Adrenal gland (tissue), 19 donors: ENCODE measurements at regions of chr11 and their contacts with region 1.

Region 1: DNA sequence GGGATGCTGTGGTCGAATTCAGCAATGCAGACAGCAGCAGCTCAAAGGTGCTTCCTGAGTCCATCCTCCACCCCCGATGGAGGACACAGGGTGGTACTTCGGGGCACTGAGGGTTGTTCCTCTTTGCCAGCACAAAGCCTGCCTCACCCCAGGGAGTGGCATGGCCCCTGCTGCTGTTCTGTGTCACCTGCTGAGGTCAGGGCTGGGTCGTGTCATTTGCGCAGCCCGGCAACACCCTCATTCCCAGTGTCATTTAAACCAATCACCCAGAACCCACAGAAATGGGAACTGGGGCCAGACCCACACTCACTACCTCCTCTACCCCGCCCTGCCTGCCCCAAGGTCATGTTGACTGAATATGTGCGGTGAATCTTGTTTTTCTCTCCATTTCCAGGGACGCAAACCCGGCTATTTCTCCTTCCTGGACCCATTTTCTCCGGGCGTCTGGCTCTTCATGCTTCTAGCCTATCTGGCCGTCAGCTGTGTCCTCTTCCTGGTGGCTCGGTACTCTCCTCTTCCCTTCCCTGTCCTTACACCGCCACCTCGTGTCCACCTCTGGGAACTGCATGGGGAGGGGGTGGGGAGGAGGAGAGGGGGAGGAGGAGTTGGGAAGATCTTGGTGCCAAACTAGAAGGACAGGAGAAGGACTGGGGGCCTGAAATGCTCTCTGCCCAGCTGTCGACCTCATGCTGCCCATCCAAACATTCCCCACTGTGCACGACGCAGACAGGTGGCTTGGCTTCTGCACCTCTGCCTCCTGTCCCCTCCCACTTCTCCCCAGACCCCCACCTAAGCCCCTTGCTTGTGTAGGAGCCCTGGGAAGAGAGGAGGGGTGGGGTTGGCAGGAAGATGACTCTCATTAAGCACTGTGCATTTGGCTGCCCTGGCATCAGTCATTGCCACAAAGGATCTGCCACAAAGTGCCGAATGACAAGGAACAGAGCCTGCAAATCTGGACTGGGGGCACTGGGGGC is 71.2 kb upstream of the TBCEL start:
- DNase-seq: peak; percentile 81 to 90 (median 82)
- H3K4me3 ChIP-seq: peak overlapping the region in 1 of 4 donors; percentile 16
- H3K27ac ChIP-seq: no peak overlapping the region
- H3K4me1 ChIP-seq: peaks cover 0 to 4% of the 10 kb centered on the region in 2 donors
- H3K27me3 ChIP-seq: no peaks in the 10 kb centered on the region
- CTCF ChIP-seq: peak; percentile 59 to 84 (median 77)
- POLR2A ChIP-seq: no peak

Region 2: DNA sequence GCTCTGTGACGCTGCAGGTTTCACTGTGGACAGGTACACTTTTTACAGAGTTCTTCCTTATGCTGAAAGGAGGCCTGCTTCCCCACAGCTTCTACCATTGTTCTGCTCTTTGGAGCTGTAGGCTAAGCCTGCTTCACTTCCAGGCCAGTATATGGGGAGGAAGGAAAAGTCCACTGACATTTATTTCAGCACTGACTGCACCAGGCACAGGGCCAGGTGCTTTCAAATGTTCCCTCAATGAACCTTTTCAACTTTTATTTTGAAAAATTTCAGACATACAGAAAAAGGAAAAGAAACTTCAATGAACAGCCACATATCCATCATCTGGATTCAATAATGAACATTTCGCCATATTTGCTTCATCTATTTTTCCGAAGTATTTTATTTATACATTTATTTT is 690.8 kb before region 1 on chr11:
- intact Hi-C with region 1: no loop called
- DNase-seq: no peak
- H3K4me3 ChIP-seq: no peak overlapping the region
- H3K27ac ChIP-seq: no peak overlapping the region
- H3K4me1 ChIP-seq: no peaks in the 10 kb centered on the region
- H3K27me3 ChIP-seq: peaks cover 3% of the 10 kb centered on the region
- CTCF ChIP-seq: no peak
- POLR2A ChIP-seq: no peak

Region 3: GRCh38 chr11:120682866-120683265 is 269.9 kb before region 1 on chr11:
- intact Hi-C with region 1: loop called (anchors 5 to 10 kb)
- DNase-seq: no peak
- H3K4me3 ChIP-seq: no peak overlapping the region
- H3K27ac ChIP-seq: no peak overlapping the region
- H3K4me1 ChIP-seq: no peaks in the 10 kb centered on the region
- H3K27me3 ChIP-seq: no peaks in the 10 kb centered on the region
- CTCF ChIP-seq: no peak
- POLR2A ChIP-seq: no peak

Region 4: GRCh38 chr11:120688163-120688562 is 264.6 kb before region 1 on chr11:
- intact Hi-C with region 1: loop called (anchors 5 to 10 kb)
- DNase-seq: no peak
- H3K4me3 ChIP-seq: no peak overlapping the region
- H3K27ac ChIP-seq: no peak overlapping the region
- H3K4me1 ChIP-seq: no peaks in the 10 kb centered on the region
- H3K27me3 ChIP-seq: no peaks in the 10 kb centered on the region
- CTCF ChIP-seq: no peak
- POLR2A ChIP-seq: no peak

Region 5: DNA sequence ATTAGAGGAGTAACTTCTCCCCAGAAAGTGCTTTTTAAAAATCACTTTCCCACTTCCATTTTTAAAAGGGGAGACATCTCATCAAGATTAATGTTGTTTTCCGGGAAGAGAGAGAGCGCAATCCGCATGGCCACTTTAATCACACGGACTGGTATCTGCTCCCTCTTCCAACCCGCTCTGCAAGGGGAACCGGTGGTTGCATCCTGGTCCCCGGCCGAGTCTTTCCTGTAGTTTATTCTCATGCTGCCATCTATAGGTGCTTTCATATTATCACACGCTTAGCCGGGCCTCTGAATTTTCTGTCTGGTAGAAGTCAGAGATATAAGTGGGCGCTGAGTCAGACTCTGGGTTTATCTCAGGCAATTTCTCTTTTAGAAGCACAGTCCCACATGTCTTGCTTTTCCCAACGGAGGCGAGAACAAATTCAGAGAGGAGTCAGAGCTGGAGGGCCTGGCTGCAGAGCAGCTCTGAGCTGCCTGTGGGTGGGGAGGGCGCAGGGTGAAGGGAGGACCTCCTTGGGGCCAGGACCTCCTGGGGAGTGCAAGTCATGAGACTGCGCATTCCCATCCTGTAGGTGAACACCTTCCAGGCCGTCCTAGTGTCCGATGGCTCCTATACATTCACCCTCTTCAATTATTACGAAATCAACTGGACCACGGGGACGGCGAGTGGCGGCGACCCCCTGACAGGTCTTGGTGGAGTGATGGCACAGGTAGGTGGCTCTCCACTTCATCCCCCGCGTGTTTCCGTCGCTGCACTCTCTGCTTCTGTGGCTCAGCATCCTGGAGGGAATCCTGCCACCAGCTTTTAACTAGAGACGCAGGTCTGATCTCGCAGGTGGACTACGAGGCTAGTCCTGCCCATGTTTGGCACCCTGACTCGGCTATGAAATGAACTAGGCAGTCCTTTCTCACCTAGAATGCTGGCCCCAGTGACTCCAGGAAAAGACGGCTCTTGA is 160.0 kb after region 1 on chr11:
- intact Hi-C with region 1: loop called in 1 of 2 experiments (anchors 10 kb)
- DNase-seq: peak; percentile 51 to 88 (median 78)
- H3K4me3 ChIP-seq: no peak overlapping the region
- H3K27ac ChIP-seq: no peak overlapping the region
- H3K4me1 ChIP-seq: no peaks in the 10 kb centered on the region
- H3K27me3 ChIP-seq: no peaks in the 10 kb centered on the region
- CTCF ChIP-seq: peak; percentile 44 to 77 (median 66)
- POLR2A ChIP-seq: no peak